HepG2 (cell line): ENCODE measurements at regions of chr21 and their contacts with region 1.

Region 1: GRCh38 chr21:42711667-42712066 is 58.2 kb downstream of the PDE9A start:
- DNase-seq: peak; percentile 90
- ATAC-seq: peak; percentile 95
- H3K4me3 ChIP-seq: no peak overlapping the region
- H3K27ac ChIP-seq: peak overlapping the region; percentile 77
- H3K4me1 ChIP-seq: peaks cover 58% of the 10 kb centered on the region
- H3K27me3 ChIP-seq: no peaks in the 10 kb centered on the region
- CTCF ChIP-seq: 0 out of 2 replicates have a peak, but pooled peaks have one; percentile 14
- EP300 ChIP-seq: peak in 1 of 2 experiments; percentile 86; a peak in 2 of 4 replicates
- POLR2A ChIP-seq: no peak
- RAD21 ChIP-seq: no peak

Region 2: DNA sequence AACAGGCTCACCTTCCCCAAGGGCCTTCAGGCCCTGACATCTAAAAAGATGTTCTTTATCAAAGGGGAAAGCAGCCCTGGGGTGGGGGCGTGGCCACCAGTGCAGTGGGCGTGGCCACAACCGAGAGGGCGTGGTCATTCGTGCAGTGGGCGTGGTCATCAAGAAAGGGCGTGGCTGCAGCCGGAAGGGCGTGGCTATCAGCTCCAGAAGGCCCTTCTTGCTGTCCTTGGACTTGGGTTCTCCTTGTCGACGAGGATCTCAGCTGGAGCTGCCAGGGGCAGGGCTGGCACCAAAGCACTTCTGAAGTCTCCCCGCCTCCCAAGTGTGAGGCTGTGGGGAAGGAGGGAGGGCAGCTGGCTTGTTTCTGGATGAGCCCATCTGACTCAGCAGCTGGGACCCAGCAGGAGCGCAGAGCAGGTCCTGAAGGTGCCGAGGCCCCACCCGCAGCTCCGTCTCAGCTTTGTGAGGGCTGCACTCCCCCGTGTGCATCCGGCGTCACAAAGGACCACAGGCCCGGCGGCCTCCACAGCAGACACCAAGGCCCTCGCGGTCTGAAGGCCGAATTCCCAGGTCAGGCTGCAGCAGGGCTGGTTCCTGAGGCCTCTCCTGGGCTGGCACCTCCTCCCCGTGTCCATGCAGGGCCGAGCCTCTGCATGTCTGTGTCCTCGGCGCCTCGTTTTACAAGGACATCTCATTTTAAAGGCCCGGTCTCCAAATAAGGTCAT is 45.5 kb before region 1 on chr21:
- CTCF ChIA-PET with region 1: no interaction called
- POLR2A ChIA-PET with region 1: no interaction called
- in situ Hi-C with region 1: no loop called
- intact Hi-C with region 1: no loop called
- DNase-seq: no peak
- ATAC-seq: no peak
- H3K4me3 ChIP-seq: no peak overlapping the region
- H3K27ac ChIP-seq: no peak overlapping the region
- H3K4me1 ChIP-seq: peaks cover 14% of the 10 kb centered on the region
- H3K27me3 ChIP-seq: no peaks in the 10 kb centered on the region; a peak in 1 of 5 replicates
- CTCF ChIP-seq: no peak
- EP300 ChIP-seq: no peak
- POLR2A ChIP-seq: no peak
- RAD21 ChIP-seq: no peak

Region 3: DNA sequence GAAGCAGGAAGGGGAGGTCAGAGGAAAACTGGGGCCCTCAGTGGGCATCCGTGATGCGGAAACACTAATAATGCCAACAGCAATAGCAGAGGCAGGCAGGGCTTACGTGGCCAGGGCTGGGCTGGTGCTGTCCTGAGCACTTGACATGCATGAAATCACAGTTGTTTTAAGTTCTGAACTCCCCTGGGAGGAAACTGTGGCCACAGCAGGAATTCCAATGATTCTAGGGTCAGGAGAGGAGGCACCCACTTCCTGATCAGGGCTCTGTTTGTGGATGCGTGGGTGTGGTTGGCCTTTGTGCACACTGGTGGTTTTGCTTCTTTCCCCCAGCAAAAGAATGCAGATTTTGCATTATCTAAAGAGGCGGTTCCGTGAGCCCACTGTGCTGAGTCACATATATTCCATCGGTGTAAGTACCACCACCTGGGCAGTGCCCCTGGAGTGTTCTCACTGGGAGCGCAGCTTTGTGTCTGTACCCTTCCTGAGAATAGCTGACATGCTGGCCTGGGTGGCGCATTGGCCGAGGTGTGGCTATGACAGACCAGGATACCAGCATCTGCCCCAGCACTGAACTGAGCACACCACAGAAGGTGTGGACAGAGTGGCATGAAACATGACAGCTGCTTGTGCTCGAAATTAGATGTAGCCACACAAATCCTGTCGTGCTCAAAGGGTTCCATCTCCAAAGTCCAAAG is 12.7 kb after region 1 on chr21:
- CTCF ChIA-PET with region 1: no interaction called
- POLR2A ChIA-PET with region 1: no interaction called
- in situ Hi-C with region 1: no loop called
- intact Hi-C with region 1: loop called (anchors 1 kb)
- DNase-seq: peak; percentile 91
- ATAC-seq: peak; percentile 91
- H3K4me3 ChIP-seq: no peak overlapping the region
- H3K27ac ChIP-seq: peak overlapping the region; percentile 63
- H3K4me1 ChIP-seq: peaks cover 58% of the 10 kb centered on the region
- H3K27me3 ChIP-seq: no peaks in the 10 kb centered on the region
- CTCF ChIP-seq: no peak
- EP300 ChIP-seq: peak in 1 of 2 experiments; percentile 65; a peak in 2 of 4 replicates
- POLR2A ChIP-seq: no peak
- RAD21 ChIP-seq: 0 out of 2 replicates have a peak, but pooled peaks have one; percentile 30

Region 4: DNA sequence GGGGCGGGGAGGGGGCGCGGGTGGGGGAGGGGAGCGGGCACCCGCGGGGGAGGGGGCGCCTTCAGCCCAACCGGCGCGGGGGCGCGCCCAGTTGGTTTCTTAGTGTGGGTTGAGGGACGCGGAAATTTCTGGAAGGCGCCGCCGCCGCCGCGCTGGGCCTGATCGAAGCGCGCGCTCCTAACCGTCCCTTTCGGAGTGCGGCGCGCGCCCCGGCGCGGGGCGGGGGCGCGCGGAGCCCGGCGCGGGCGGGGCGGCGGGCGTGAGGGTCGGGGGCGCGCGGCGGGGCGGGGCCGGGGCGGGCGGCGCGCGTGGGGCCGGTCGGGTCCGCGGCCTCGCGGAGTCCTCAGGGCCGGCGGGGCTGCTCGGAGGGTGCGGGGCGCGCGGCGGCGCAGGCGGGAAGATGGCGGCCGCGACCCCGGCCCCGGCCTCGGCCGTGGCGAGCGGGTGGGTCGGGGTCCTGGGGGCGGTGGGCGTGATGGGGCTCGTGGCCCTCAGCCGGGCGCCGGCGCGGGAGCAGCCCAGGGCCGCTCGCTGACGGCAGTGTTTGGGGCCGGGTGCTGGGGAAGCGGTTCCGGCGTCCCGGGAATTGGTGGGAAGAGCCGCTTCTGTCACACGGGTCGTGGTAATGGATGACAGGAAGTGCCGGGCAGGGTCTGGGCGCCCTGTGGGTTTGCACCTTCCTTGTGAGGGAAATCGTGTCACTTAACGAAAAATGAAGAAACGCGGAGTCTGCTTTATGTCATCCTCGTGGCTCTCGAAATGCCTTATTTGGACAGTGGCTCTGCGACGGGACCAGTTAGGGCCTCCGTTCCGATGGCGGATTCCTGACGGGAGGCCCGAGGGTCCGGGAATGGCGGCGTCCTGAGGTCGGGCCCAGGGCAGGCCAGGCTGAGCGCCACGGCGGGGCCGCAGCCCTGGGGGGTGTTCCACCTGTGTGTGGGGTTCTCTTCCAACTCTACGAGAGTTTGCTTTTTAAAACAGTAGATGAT is 263.5 kb after region 1 on chr21:
- CTCF ChIA-PET with region 1: no interaction called
- POLR2A ChIA-PET with region 1: no interaction called
- in situ Hi-C with region 1: no loop called
- intact Hi-C with region 1: no loop called
- DNase-seq: peak; percentile 42
- ATAC-seq: peak; percentile 24
- H3K4me3 ChIP-seq: peak overlapping the region; percentile 65 to 86 (median 84)
- H3K27ac ChIP-seq: peak overlapping the region; percentile 87
- H3K4me1 ChIP-seq: peaks cover 56% of the 10 kb centered on the region
- H3K27me3 ChIP-seq: no peaks in the 10 kb centered on the region; a peak in 1 of 5 replicates
- CTCF ChIP-seq: no peak
- EP300 ChIP-seq: no peak
- POLR2A ChIP-seq: peak in 1 of 2 experiments; percentile 61; a peak in 2 of 4 replicates
- RAD21 ChIP-seq: no peak; the same call in 1 of the 2 replicates